Upper lobe of right lung (tissue), 1 donor: ENCODE measurements at regions of chr1 and their contacts with region 1.

Region 1: GRCh38 chr1:15810073-15810472 is 2.6 kb upstream of the UQCRHL start:
- DNase-seq: no peak
- ATAC-seq: no peak
- H3K4me3 ChIP-seq: no peak overlapping the region
- H3K27ac ChIP-seq: no peak overlapping the region
- H3K4me1 ChIP-seq: no peaks in the 10 kb centered on the region
- H3K27me3 ChIP-seq: no peaks in the 10 kb centered on the region
- CTCF ChIP-seq: no peak

Region 2: GRCh38 chr1:15994590-15995351 is 184.7 kb after region 1 on chr1:
- intact Hi-C with region 1: loop called (anchors 10 kb)
- DNase-seq: peak; percentile 83
- ATAC-seq: peak; percentile 92
- H3K4me3 ChIP-seq: no peak overlapping the region
- H3K27ac ChIP-seq: no peak overlapping the region
- H3K4me1 ChIP-seq: no peaks in the 10 kb centered on the region
- H3K27me3 ChIP-seq: no peaks in the 10 kb centered on the region
- CTCF ChIP-seq: peak; percentile 86